H1 (cell line): ENCODE measurements at regions of chr5 and their contacts with region 1.

Region 1: DNA sequence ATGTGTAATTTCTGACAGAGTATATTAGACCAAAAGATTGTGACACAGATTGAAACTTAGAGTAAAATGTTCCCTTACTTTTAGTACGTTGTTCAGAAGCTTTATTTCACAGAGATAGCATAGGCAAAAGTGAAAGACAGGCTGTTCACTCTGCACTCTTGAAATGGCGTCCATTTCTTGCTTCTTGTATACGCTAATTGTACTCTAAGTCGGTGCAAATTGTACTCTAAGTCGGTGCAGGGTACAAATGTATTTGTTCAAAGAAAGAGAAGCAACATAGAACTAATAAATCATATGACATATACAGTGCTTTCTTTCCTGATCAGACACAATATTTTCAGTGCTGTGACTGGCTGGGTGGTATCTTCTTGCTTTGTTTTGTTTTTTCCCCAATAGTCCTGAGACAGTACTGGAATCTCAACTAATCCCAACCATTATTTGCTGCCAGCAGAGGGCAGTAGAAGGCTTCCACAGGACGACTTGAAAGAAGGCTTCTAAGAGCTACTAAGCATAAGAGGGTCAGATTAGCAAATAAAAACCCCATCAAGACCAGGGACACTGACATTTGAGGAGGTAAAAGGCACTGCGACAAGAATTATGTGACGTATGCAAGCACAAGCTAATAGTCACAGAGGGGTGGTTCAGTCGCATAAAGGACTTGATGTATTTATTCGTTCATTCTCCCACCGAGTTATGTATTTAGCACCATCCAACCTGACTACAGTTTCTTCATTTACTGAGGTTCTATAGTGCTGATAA is 831.8 kb downstream of the TAF11L14 start:
- DNase-seq: peak; percentile 31 to 90
- H3K4me3 ChIP-seq: no peak overlapping the region
- H3K27ac ChIP-seq: no peak overlapping the region
- H3K4me1 ChIP-seq: no peaks in the 10 kb centered on the region
- H3K27me3 ChIP-seq: no peaks in the 10 kb centered on the region
- CTCF ChIP-seq: peak in 2 of 3 experiments; percentile 82 to 83; a peak in 3 of 4 replicates
- EP300 ChIP-seq: no peak
- POLR2A ChIP-seq: no peak
- RAD21 ChIP-seq: peak; percentile 96

Region 2: GRCh38 chr5:18455521-18455920 is 10.5 kb before region 1 on chr5:
- CTCF ChIA-PET with region 1: interaction called, 12 read pairs
- POLR2A ChIA-PET with region 1: no interaction called
- DNase-seq: no peak
- H3K4me3 ChIP-seq: no peak overlapping the region
- H3K27ac ChIP-seq: no peak overlapping the region
- H3K4me1 ChIP-seq: no peaks in the 10 kb centered on the region
- H3K27me3 ChIP-seq: no peaks in the 10 kb centered on the region
- CTCF ChIP-seq: no peak
- EP300 ChIP-seq: no peak
- POLR2A ChIP-seq: no peak
- RAD21 ChIP-seq: no peak

Region 3: GRCh38 chr5:18495157-18495556 is 29.1 kb after region 1 on chr5:
- CTCF ChIA-PET with region 1: no interaction called
- POLR2A ChIA-PET with region 1: no interaction called
- DNase-seq: no peak
- H3K4me3 ChIP-seq: no peak overlapping the region
- H3K27ac ChIP-seq: no peak overlapping the region
- H3K4me1 ChIP-seq: no peaks in the 10 kb centered on the region
- H3K27me3 ChIP-seq: no peaks in the 10 kb centered on the region
- CTCF ChIP-seq: no peak
- EP300 ChIP-seq: no peak
- POLR2A ChIP-seq: no peak
- RAD21 ChIP-seq: no peak

Region 4: DNA sequence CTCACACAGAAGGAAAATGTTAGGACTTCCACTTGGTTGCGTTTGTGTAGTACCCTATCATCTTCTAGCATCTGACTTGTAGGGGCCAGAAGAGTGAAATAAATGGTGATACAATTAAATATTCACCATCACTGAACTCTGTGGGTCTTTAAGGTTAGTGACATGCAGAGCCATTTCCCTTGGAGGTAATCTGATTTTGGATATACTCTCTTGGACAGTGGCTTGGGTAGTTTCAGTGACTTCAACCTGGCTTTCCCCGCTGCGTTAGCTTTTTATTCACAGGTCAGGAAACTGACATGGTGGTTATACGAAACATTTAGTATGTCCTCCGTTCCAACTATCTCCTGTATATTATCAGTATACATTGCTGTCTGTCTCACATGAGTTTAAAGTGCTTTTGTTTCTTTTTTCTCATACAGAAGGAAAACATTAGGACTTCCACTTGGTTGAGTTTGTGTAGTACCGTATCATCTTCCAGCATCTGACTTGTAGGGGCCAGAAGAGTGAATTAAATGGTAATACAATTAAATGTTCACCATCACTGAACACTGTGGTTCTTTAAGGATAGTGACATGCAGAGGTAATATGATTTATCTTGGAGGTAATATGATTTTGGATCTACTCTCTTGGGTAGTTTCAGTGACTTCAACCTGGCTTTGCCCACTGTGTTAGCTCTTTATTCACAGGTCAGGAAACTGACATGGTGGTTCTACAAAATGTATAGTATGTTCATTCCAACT is 51.8 kb after region 1 on chr5:
- CTCF ChIA-PET with region 1: no interaction called
- POLR2A ChIA-PET with region 1: no interaction called
- DNase-seq: no peak
- H3K4me3 ChIP-seq: no peak overlapping the region
- H3K27ac ChIP-seq: no peak overlapping the region
- H3K4me1 ChIP-seq: no peaks in the 10 kb centered on the region
- H3K27me3 ChIP-seq: no peaks in the 10 kb centered on the region
- CTCF ChIP-seq: no peak
- EP300 ChIP-seq: no peak
- POLR2A ChIP-seq: no peak
- RAD21 ChIP-seq: no peak

Region 5: GRCh38 chr5:18761801-18762200 is 295.8 kb after region 1 on chr5:
- CTCF ChIA-PET with region 1: no interaction called
- POLR2A ChIA-PET with region 1: no interaction called
- DNase-seq: no peak
- H3K4me3 ChIP-seq: no peak overlapping the region
- H3K27ac ChIP-seq: no peak overlapping the region
- H3K4me1 ChIP-seq: no peaks in the 10 kb centered on the region
- H3K27me3 ChIP-seq: no peaks in the 10 kb centered on the region
- CTCF ChIP-seq: no peak
- EP300 ChIP-seq: no peak
- POLR2A ChIP-seq: no peak
- RAD21 ChIP-seq: no peak